CD8-positive, alpha-beta T cell (primary cell): ENCODE measurements at regions of chr7 and their contacts with region 1.

Region 1: GRCh38 chr7:151631968-151632749 is 112.5 kb upstream of the RHEB start:
- DNase-seq: peak; percentile 72 to 95 (median 87)
- ATAC-seq: peak; percentile 82
- H3K4me3 ChIP-seq: peak overlapping the region; percentile 68 to 85
- H3K4me3 Mint-ChIP-seq: peak overlapping the region; percentile 98
- H3K27ac ChIP-seq: peak overlapping the region; percentile 68 to 82
- H3K27ac Mint-ChIP-seq: peak overlapping the region; percentile 98
- H3K4me1 ChIP-seq: peaks cover 18% of the 10 kb centered on the region
- H3K4me1 Mint-ChIP-seq: peaks cover 39% of the 10 kb centered on the region
- H3K27me3 ChIP-seq: no peaks in the 10 kb centered on the region
- H3K27me3 Mint-ChIP-seq: no peaks in the 10 kb centered on the region
- CTCF ChIP-seq: no peak

Region 2: GRCh38 chr7:151226875-151227782 is 405.0 kb before region 1 on chr7 and contains the start of gene ABCF2:
- CTCF ChIA-PET with region 1: no interaction called
- POLR2A ChIA-PET with region 1: no interaction called
- intact Hi-C with region 1: loop called in 1 of 2 experiments (anchors 2 kb)
- DNase-seq: peak; percentile 94 to 99 (median 98)
- ATAC-seq: peak; percentile 98
- H3K4me3 ChIP-seq: peak within 1 kb of the TSS; percentile 69 to 84
- H3K4me3 Mint-ChIP-seq: peak within 1 kb of the TSS; percentile 100
- H3K27ac ChIP-seq: peak within 1 kb of the TSS; percentile 67 to 79
- H3K27ac Mint-ChIP-seq: peak within 1 kb of the TSS; percentile 97
- H3K4me1 ChIP-seq: peaks cover 27% of the 10 kb centered on the region
- H3K4me1 Mint-ChIP-seq: peaks cover 48% of the 10 kb centered on the region
- H3K27me3 ChIP-seq: no peaks in the 10 kb centered on the region
- H3K27me3 Mint-ChIP-seq: no peaks in the 10 kb centered on the region
- CTCF ChIP-seq: no peak
- total RNA-seq, gene ABCF2: 12.7 to 16.5 TPM

Region 3: GRCh38 chr7:151341357-151342101 is 290.6 kb before region 1 on chr7 and contains the start of gene NUB1:
- CTCF ChIA-PET with region 1: no interaction called
- POLR2A ChIA-PET with region 1: no interaction called
- intact Hi-C with region 1: loop called (anchors 5 to 10 kb)
- DNase-seq: peak; percentile 83 to 98 (median 92)
- ATAC-seq: peak; percentile 91
- H3K4me3 ChIP-seq: peak within 1 kb of the TSS; percentile 68 to 82
- H3K4me3 Mint-ChIP-seq: peak within 1 kb of the TSS; percentile 88
- H3K27ac ChIP-seq: peak within 1 kb of the TSS; percentile 72 to 75
- H3K27ac Mint-ChIP-seq: peak within 1 kb of the TSS; percentile 92
- H3K4me1 ChIP-seq: peaks cover 23% of the 10 kb centered on the region
- H3K4me1 Mint-ChIP-seq: peaks cover 35% of the 10 kb centered on the region
- H3K27me3 ChIP-seq: no peaks in the 10 kb centered on the region
- H3K27me3 Mint-ChIP-seq: no peaks in the 10 kb centered on the region
- CTCF ChIP-seq: no peak
- total RNA-seq, gene NUB1: 78.4 to 81.2 TPM

Region 4: GRCh38 chr7:151519765-151520418 is 112.3 kb before region 1 on chr7 and contains the start of gene RHEB:
- CTCF ChIA-PET with region 1: interaction called, 3 read pairs
- POLR2A ChIA-PET with region 1: interaction called, 10 read pairs
- intact Hi-C with region 1: loop called (anchors 1 to 2 kb)
- DNase-seq: peak; percentile 94 to 99 (median 98)
- ATAC-seq: peak; percentile 82
- H3K4me3 ChIP-seq: peak within 1 kb of the TSS; percentile 65 to 73
- H3K4me3 Mint-ChIP-seq: peak within 1 kb of the TSS; percentile 84
- H3K27ac ChIP-seq: peak within 1 kb of the TSS; percentile 85 to 86
- H3K27ac Mint-ChIP-seq: peak within 1 kb of the TSS; percentile 94
- H3K4me1 ChIP-seq: peaks cover 34% of the 10 kb centered on the region
- H3K4me1 Mint-ChIP-seq: peaks cover 41% of the 10 kb centered on the region
- H3K27me3 ChIP-seq: no peaks in the 10 kb centered on the region
- H3K27me3 Mint-ChIP-seq: no peaks in the 10 kb centered on the region
- CTCF ChIP-seq: no peak
- total RNA-seq, gene RHEB: 57.2 to 61.0 TPM

Region 5: GRCh38 chr7:151570366-151570915 is 61.7 kb before region 1 on chr7:
- CTCF ChIA-PET with region 1: no interaction called
- POLR2A ChIA-PET with region 1: no interaction called
- intact Hi-C with region 1: loop called in 1 of 2 experiments (anchors 5 kb)
- DNase-seq: peak in 2 of 9 experiments; percentile 13 to 35
- ATAC-seq: no peak
- H3K4me3 ChIP-seq: no peak overlapping the region
- H3K4me3 Mint-ChIP-seq: no peak overlapping the region
- H3K27ac ChIP-seq: no peak overlapping the region
- H3K27ac Mint-ChIP-seq: no peak overlapping the region
- H3K4me1 ChIP-seq: no peaks in the 10 kb centered on the region
- H3K4me1 Mint-ChIP-seq: no peaks in the 10 kb centered on the region
- H3K27me3 ChIP-seq: no peaks in the 10 kb centered on the region
- H3K27me3 Mint-ChIP-seq: no peaks in the 10 kb centered on the region
- CTCF ChIP-seq: no peak

Region 6: DNA sequence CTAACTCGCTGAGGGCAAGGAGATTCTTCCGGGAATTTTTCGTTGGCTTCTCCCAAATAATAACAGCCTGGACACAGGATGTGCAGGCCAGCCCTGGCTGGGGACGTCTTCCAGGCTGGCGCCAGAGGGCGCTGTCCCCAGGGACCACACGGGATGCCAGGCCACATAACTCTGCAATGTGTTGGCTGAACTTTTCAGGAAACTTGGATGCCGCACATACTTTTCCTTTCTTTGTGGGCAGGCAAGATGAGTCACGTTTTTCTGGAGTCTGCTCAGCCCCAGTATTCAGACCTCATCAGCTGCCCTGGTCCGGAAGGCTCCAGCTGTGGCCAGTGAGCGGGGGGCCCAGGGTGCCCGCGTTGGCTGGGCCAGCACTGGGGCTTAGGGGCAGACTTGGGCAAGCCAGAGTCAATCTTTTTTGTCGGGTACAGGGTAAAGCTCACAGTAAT is 122.0 kb after region 1 on chr7:
- CTCF ChIA-PET with region 1: interaction called, 19 read pairs
- POLR2A ChIA-PET with region 1: interaction called, 3 read pairs
- intact Hi-C with region 1: loop called in 1 of 2 experiments (anchors 2 kb)
- DNase-seq: peak in 3 of 9 experiments; percentile 17 to 48 (median 34)
- ATAC-seq: no peak
- H3K4me3 ChIP-seq: no peak overlapping the region
- H3K4me3 Mint-ChIP-seq: no peak overlapping the region
- H3K27ac ChIP-seq: no peak overlapping the region
- H3K27ac Mint-ChIP-seq: no peak overlapping the region
- H3K4me1 ChIP-seq: peaks cover 20% of the 10 kb centered on the region
- H3K4me1 Mint-ChIP-seq: peaks cover 24% of the 10 kb centered on the region
- H3K27me3 ChIP-seq: no peaks in the 10 kb centered on the region
- H3K27me3 Mint-ChIP-seq: no peaks in the 10 kb centered on the region
- CTCF ChIP-seq: no peak

Region 7: DNA sequence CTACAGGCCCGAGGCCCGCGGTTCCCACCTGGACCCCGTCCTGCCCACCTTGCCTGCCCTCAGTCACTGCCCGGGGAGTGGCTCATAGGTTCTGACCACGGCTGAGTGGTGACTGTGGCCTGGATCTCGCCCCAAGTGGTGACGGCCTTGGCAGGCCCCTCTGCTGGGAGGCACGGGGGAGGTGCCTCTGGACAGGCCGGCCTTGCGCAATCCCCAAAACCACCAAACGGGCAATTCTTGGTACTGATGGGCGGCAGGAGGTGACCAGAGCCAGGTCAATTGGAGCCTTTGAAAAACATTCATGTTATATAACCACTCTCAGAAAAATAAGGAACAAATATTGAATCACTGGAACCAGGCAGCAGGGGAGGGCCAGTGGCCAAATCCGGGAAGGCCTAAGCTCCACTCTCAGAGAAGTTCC is 161.4 kb after region 1 on chr7:
- CTCF ChIA-PET with region 1: no interaction called
- POLR2A ChIA-PET with region 1: no interaction called
- intact Hi-C with region 1: no loop called
- DNase-seq: peak in 1 of 9 experiments; percentile 40
- ATAC-seq: no peak
- H3K4me3 ChIP-seq: no peak overlapping the region
- H3K4me3 Mint-ChIP-seq: no peak overlapping the region
- H3K27ac ChIP-seq: no peak overlapping the region
- H3K27ac Mint-ChIP-seq: no peak overlapping the region
- H3K4me1 ChIP-seq: no peaks in the 10 kb centered on the region
- H3K4me1 Mint-ChIP-seq: peaks cover 23% of the 10 kb centered on the region
- H3K27me3 ChIP-seq: no peaks in the 10 kb centered on the region
- H3K27me3 Mint-ChIP-seq: no peaks in the 10 kb centered on the region
- CTCF ChIP-seq: no peak

Region 8: DNA sequence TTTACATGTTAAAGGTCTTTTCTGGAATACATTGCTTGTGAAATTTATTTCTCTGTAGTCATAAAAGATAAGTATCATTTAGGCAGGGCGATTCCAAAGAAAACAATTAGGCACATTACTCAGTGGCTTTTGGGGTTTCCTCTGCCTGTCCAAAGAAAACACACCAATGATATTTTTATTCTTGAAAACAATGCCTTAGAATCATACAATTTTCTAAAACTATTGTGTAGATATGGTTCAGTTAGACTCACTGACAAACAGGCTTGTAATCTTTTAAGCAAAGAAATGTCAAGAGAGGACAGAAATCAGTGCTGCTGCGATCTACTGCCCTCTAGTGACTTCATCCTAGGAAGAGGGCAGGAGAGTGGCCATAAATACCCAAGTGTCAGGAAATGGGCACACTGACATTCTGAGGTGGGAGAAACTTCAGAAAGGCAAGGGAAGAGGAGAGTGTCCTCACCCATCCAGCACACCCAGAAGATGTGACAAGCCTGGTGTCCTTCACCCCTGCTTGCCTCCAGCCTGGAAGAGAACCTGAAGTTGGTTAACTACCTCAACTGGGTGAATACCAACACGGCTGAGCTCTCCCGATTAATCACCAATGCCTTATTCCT is 513.8 kb after region 1 on chr7:
- CTCF ChIA-PET with region 1: no interaction called
- POLR2A ChIA-PET with region 1: no interaction called
- intact Hi-C with region 1: loop called in 1 of 2 experiments (anchors 10 kb)
- DNase-seq: peak in 7 of 9 experiments; percentile 11 to 65 (median 43)
- ATAC-seq: peak; percentile 46
- H3K4me3 ChIP-seq: no peak overlapping the region
- H3K4me3 Mint-ChIP-seq: no peak overlapping the region
- H3K27ac ChIP-seq: peak overlapping the region in 1 of 2 experiments; percentile 61
- H3K27ac Mint-ChIP-seq: peak overlapping the region; percentile 91
- H3K4me1 ChIP-seq: peaks cover 47% of the 10 kb centered on the region
- H3K4me1 Mint-ChIP-seq: peaks cover 46% of the 10 kb centered on the region
- H3K27me3 ChIP-seq: no peaks in the 10 kb centered on the region
- H3K27me3 Mint-ChIP-seq: no peaks in the 10 kb centered on the region
- CTCF ChIP-seq: peak; percentile 53